Panc1 (cell line): ENCODE measurements at regions of chr5 and their contacts with region 1.

Region 1: GRCh38 chr5:87787625-87788256 is 375.0 kb upstream of the CCNH start:
- DNase-seq: no peak
- ATAC-seq: no peak
- H3K4me3 ChIP-seq: no peak overlapping the region
- H3K27ac ChIP-seq: no peak overlapping the region
- H3K4me1 ChIP-seq: no peaks in the 10 kb centered on the region
- H3K27me3 ChIP-seq: no peaks in the 10 kb centered on the region; the same call in 1 of the 2 replicates
- CTCF ChIP-seq: no peak

Region 2: DNA sequence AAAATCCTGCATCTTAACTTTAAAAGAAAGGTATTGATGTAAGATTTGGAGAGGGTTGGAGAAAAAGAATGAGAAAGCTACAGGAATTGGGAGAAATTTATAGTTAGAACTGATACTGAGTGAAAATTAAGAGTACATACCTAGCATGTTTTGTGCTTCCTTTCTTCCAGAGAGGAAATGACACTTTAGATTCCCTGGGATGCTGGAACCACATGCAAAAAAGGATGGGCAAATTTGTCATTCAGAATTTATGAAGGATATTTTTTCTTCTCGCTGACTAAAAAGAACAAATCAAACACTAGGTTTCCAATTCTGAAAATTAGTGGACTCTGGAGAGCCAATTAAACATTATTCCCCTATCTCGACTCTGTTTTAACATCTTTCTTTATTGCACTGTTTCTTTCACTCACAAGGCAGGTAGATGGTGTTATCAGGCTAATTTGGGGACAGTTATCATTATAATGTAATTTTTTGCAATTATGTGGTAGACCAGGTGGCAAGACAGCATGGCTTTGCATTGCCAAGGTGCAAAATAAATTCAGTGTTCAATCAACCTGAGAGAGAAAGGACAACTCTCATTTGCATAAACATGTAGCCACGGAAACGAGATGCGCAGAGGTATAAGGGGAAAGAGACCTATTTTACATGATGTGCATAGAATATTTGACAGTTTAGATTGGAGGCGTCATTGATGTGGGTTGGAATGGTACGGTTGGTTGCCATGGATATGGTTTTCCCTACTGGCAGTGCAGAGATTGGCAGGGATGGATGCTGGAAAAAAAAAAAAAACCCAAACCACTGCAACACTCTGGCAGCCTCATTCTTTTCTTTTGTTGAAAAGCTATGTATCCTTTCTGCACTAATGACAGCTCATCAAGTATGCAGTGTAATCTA is 54.6 kb before region 1 on chr5:
- CTCF ChIA-PET with region 1: no interaction called
- POLR2A ChIA-PET with region 1: no interaction called
- in situ Hi-C with region 1: no loop called
- intact Hi-C with region 1: no loop called
- DNase-seq: no peak
- ATAC-seq: no peak
- H3K4me3 ChIP-seq: no peak overlapping the region
- H3K27ac ChIP-seq: no peak overlapping the region
- H3K4me1 ChIP-seq: no peaks in the 10 kb centered on the region
- H3K27me3 ChIP-seq: no peaks in the 10 kb centered on the region
- CTCF ChIP-seq: no peak

Region 3: DNA sequence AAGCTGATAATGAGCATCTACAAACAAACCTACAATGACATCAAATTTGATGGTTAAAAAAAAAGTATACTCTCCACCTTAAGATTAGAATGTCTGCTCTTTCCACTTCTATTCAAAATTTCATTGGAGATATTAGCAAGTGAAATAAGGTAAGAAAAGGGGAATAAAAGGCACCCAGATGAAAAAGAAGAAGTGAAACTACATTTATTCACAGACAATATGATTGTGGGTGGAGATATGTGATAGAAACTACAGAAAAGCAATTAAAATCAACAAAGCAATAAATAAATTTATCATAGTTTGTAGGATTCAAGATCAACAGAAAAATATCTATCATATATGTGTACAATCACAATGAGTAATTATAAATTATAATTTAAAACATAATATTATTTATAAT is 20.0 kb after region 1 on chr5:
- CTCF ChIA-PET with region 1: no interaction called
- POLR2A ChIA-PET with region 1: no interaction called
- in situ Hi-C with region 1: no loop called
- intact Hi-C with region 1: no loop called
- DNase-seq: no peak
- ATAC-seq: no peak
- H3K4me3 ChIP-seq: no peak overlapping the region
- H3K27ac ChIP-seq: no peak overlapping the region
- H3K4me1 ChIP-seq: no peaks in the 10 kb centered on the region
- H3K27me3 ChIP-seq: no peaks in the 10 kb centered on the region
- CTCF ChIP-seq: no peak

Region 4: GRCh38 chr5:88724201-88724600 is 936.5 kb after region 1 on chr5:
- CTCF ChIA-PET with region 1: no interaction called
- POLR2A ChIA-PET with region 1: interaction called, 12 read pairs
- in situ Hi-C with region 1: no loop called
- intact Hi-C with region 1: no loop called
- DNase-seq: no peak
- ATAC-seq: no peak
- H3K4me3 ChIP-seq: no peak overlapping the region
- H3K27ac ChIP-seq: no peak overlapping the region
- H3K4me1 ChIP-seq: no peaks in the 10 kb centered on the region
- H3K27me3 ChIP-seq: no peaks in the 10 kb centered on the region
- CTCF ChIP-seq: peak; percentile 41; the same call in 1 of the 2 replicates